ENCODE measurements at regions of chr11 and their contacts with region 1.

Region 1: GRCh38 chr11:65817835-65818742 is 15.7 kb upstream of the SNX32 start:
- DNase-seq: peak; percentile 93 to 98 (median 98)
- ATAC-seq: peak; percentile 96
- H3K4me3 ChIP-seq: peak overlapping the region; percentile 82
- H3K27ac ChIP-seq: peak overlapping the region; percentile 19
- H3K4me1 ChIP-seq: no peaks in the 10 kb centered on the region
- H3K27me3 ChIP-seq: no peaks in the 10 kb centered on the region

Region 2: DNA sequence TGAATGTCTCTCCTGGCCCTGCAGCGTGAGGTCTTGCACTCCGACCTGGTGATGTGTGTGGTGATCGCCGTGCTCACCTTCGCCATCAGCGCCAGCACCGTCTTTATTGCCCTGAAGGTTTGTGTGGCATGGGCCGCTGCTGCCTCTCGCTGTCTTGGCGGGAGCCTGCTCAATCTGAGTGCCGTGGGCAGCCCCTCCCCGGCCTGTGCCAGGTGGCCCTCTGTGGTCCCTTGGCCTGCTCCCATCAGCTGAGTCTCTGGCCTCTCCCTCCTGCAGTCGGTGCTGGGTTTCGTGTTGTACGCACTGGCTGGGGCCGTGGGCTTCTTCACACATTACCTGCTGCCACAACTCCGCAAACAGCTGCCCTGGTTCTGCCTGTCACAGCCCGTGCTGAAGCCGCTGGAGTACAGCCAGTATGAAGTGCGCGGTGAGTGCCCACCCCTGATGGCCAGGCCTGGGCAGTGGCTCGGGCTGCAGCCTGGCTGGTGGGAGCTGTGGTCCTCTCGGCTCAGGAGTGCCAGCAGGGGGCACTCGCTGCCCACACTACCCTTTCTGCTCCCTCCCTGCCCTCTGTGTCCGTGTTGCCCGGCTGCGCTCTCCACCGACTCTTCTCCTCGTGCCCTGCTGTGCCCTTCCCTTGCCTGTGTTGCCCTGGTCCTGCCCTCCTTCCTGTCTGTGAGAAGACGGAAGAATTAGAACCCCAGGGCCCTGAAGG is 192.3 kb before region 1 on chr11:
- intact Hi-C with region 1: loop called in 2 of 4 experiments (anchors 5 to 10 kb)
- DNase-seq: peak; percentile 57 to 88 (median 87)
- ATAC-seq: peak; percentile 65 to 72
- H3K4me3 ChIP-seq: no peak overlapping the region
- H3K27ac ChIP-seq: no peak overlapping the region
- H3K4me1 ChIP-seq: no peaks in the 10 kb centered on the region
- H3K27me3 ChIP-seq: no peaks in the 10 kb centered on the region

Region 3: GRCh38 chr11:65637794-65638317 is 180.2 kb before region 1 on chr11 and contains the start of gene SIPA1:
- intact Hi-C with region 1: loop called in 1 of 4 experiments (anchors 10 kb)
- DNase-seq: peak; percentile 81 to 92 (median 90)
- ATAC-seq: peak; percentile 84 to 85
- H3K4me3 ChIP-seq: peak within 1 kb of the TSS; percentile 75
- H3K27ac ChIP-seq: peak within 1 kb of the TSS; percentile 89
- H3K4me1 ChIP-seq: peaks cover 2% of the 10 kb centered on the region
- H3K27me3 ChIP-seq: no peaks in the 10 kb centered on the region
- total RNA-seq, gene SIPA1: 22.4 to 27.4 (median 26.2) TPM

Region 4: DNA sequence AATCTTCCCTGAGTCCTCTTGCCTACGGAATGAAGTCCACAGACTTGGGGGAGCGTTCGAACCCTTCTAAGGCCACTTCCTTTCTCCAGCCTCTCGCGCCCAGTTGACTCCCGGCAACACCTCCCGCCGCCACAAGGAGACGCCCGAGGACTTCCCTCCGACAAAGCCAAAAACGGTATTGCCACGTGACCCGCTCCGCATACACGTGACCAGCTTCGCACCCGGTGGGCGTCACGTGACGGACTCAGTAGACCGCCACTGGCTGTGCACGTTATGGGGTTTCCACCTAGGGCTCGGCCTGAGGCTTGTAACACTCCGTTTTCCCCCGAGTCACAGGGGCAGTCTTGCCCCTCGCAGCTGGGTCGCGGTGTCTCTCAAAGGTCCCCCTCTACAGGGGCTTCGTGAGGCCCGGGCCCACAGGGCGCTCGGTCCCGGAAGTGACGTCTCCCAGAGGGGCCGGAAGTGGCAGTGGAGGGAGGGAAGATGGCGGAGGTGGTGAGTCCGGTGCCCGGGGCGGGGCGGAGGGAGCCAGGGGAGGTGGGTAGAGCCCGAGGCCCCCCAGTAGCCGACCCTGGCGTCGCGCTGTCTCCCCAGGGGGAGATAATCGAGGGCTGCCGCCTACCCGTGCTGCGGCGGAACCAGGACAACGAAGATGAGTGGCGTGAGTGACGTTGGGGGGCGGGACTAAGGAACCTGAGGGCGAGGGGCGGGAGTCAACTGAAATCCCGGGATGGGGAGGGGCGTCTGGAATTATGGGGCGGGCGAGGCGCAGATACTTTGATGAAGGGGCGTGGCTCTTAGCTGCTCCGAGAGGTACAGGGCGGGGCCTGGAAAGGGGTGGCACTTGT is 106.1 kb before region 1 on chr11 and contains the start of gene KAT5:
- intact Hi-C with region 1: loop called (anchors 2 to 10 kb)
- DNase-seq: peak; percentile 98 to 99 (median 99)
- ATAC-seq: peak; percentile 93
- H3K4me3 ChIP-seq: peak within 1 kb of the TSS; percentile 77
- H3K27ac ChIP-seq: peak within 1 kb of the TSS; percentile 96
- H3K4me1 ChIP-seq: peaks cover 4% of the 10 kb centered on the region
- H3K27me3 ChIP-seq: no peaks in the 10 kb centered on the region
- total RNA-seq, gene KAT5: 49.0 to 57.2 (median 54.0) TPM

Region 5: GRCh38 chr11:65779851-65780577 is 38.1 kb before region 1 on chr11:
- intact Hi-C with region 1: loop called in 3 of 4 experiments (anchors 5 kb)
- DNase-seq: peak; percentile 82 to 93 (median 91)
- ATAC-seq: peak; percentile 82 to 87
- H3K4me3 ChIP-seq: peak overlapping the region; percentile 94
- H3K27ac ChIP-seq: peak overlapping the region; percentile 26
- H3K4me1 ChIP-seq: no peaks in the 10 kb centered on the region
- H3K27me3 ChIP-seq: no peaks in the 10 kb centered on the region

Region 6: GRCh38 chr11:66051766-66052663 is 233.9 kb after region 1 on chr11 and contains the start of gene SF3B2:
- intact Hi-C with region 1: no loop called
- DNase-seq: peak; percentile 99
- ATAC-seq: peak; percentile 96 to 98
- H3K4me3 ChIP-seq: peak within 1 kb of the TSS; percentile 72
- H3K27ac ChIP-seq: peak within 1 kb of the TSS; percentile 82
- H3K4me1 ChIP-seq: peaks cover 7% of the 10 kb centered on the region
- H3K27me3 ChIP-seq: no peaks in the 10 kb centered on the region
- total RNA-seq, gene SF3B2: 84.4 to 97.7 (median 91.7) TPM